ENCODE measurements at regions of chr1 and their contacts with region 1.

Region 1: DNA sequence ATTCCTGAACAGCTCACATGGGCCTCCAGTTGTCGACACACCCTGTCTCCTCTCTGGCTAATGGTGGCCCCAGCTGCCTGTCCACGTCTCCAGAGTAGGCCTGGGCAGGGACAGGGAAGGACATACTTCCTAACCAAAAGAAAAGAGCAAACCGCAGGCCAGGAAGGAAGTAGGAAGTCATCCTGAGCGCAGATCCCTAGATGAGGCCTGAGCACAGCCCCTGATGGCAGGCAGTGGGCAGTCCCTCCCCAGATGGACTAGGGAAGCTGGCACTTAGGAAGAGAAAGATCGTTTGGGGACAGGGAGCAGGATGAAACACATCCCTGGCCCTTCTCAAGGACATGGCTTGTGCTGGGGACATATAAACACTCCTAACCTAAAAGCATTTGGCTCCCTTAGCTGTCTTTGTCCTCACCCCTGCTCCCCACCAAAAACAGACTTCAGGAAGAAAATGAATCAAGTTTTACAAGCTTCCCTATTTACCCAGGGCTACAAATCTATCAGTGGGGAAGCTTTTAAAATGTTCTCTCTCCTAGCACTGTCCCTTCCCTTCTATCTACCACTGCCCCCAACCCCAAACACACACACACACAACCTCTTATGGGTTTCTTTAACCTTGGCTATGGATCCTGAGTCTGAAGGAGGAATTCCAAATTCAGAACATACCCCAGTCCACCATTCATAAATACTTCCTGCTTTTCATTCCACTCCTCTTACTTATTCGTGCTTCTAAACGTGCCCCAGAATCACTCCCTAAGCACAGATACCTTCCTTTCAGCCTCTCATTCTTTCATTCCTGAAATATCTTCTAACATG is 21.1 kb downstream of the SSBP3 start:
- DNase-seq: no peak
- H3K4me3 ChIP-seq: no peak overlapping the region
- H3K27ac ChIP-seq: no peak overlapping the region
- H3K4me1 ChIP-seq: peaks cover 0 to 7% (median 6%) of the 10 kb centered on the region in 4 experiments; a peak in 6 of 7 replicates
- H3K27me3 ChIP-seq: no peaks in the 10 kb centered on the region
- CTCF ChIP-seq: no peak
- EP300 ChIP-seq: no peak
- POLR2A ChIP-seq: no peak
- RAD21 ChIP-seq: no peak

Region 2: GRCh38 chr1:54397090-54397591 is 12.0 kb after region 1 on chr1:
- CTCF ChIA-PET with region 1: interaction called, 10 read pairs
- POLR2A ChIA-PET with region 1: interaction called, 7 read pairs
- DNase-seq: no peak
- H3K4me3 ChIP-seq: no peak overlapping the region
- H3K27ac ChIP-seq: no peak overlapping the region
- H3K4me1 ChIP-seq: peaks cover 0 to 6% (median 4%) of the 10 kb centered on the region in 4 experiments; a peak in 4 of 7 replicates
- H3K27me3 ChIP-seq: no peaks in the 10 kb centered on the region
- CTCF ChIP-seq: no peak
- EP300 ChIP-seq: no peak
- POLR2A ChIP-seq: no peak
- RAD21 ChIP-seq: no peak

Region 3: GRCh38 chr1:54474639-54475251 is 89.6 kb after region 1 on chr1:
- CTCF ChIA-PET with region 1: no interaction called
- POLR2A ChIA-PET with region 1: no interaction called
- DNase-seq: peak in 1 of 2 experiments; percentile 77
- H3K4me3 ChIP-seq: peak overlapping the region; percentile 38 to 55 (median 44)
- H3K27ac ChIP-seq: no peak overlapping the region; the same call in 1 of the 2 replicates
- H3K4me1 ChIP-seq: peaks cover 20 to 43% (median 30%) of the 10 kb centered on the region in 4 experiments
- H3K27me3 ChIP-seq: peaks cover 0 to 27% (median 12%) of the 10 kb centered on the region in 4 experiments; a peak in 5 of 7 replicates
- CTCF ChIP-seq: no peak
- EP300 ChIP-seq: no peak; a peak in 1 of 3 replicates
- POLR2A ChIP-seq: no peak
- RAD21 ChIP-seq: no peak; a peak in 1 of 4 replicates

Region 4: DNA sequence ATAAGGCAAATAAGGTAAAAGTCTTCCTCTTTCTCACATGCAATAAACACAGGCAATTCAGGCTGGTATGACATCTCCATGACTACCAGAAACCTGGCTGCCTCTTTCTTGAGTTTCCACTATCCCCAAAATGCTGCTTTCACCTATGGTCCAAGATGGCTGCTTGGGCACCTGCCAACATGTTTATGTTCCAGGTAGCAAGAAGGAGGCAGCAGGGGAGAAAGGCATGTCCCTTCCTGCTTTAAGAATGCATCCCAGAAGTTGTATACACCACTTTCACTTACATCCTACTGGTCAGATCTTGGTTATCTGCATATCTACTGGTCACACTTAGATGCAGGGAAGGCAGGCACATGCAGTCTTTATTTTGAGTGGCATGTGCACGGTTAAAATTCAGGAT is 143.5 kb after region 1 on chr1:
- CTCF ChIA-PET with region 1: no interaction called
- POLR2A ChIA-PET with region 1: no interaction called
- DNase-seq: no peak
- H3K4me3 ChIP-seq: no peak overlapping the region
- H3K27ac ChIP-seq: no peak overlapping the region
- H3K4me1 ChIP-seq: no peaks in the 10 kb centered on the region
- H3K27me3 ChIP-seq: no peaks in the 10 kb centered on the region
- CTCF ChIP-seq: no peak
- EP300 ChIP-seq: no peak
- POLR2A ChIP-seq: no peak
- RAD21 ChIP-seq: no peak

Measured in H1 (cell line).